ENCODE measurements at regions of chr20 and their contacts with region 1.

Region 1: GRCh38 chr20:58907399-58908137 is 55.1 kb downstream of the GNAS start:
- DNase-seq: peak; percentile 92 to 98
- H3K4me3 ChIP-seq: peak overlapping the region; percentile 1 to 32 (median 21)
- H3K27ac ChIP-seq: peak overlapping the region; percentile 73 to 89 (median 86)
- H3K4me1 ChIP-seq: peaks cover 32 to 63% (median 47%) of the 10 kb centered on the region in 4 donors
- H3K27me3 ChIP-seq: no peaks in the 10 kb centered on the region
- CTCF ChIP-seq: no peak
- EP300 ChIP-seq: no peak
- POLR2A ChIP-seq: no peak

Region 2: GRCh38 chr20:58980700-58981627 is 73.4 kb after region 1 on chr20 and contains the start of gene NELFCD:
- intact Hi-C with region 1: loop called (anchors 10 kb)
- DNase-seq: peak; percentile 92 to 96
- H3K4me3 ChIP-seq: peak within 1 kb of the TSS; percentile 74 to 97 (median 82)
- H3K27ac ChIP-seq: peak within 1 kb of the TSS; percentile 84 to 95 (median 88)
- H3K4me1 ChIP-seq: peaks cover 14 to 43% (median 36%) of the 10 kb centered on the region in 4 donors
- H3K27me3 ChIP-seq: no peaks in the 10 kb centered on the region
- CTCF ChIP-seq: no peak
- EP300 ChIP-seq: no peak
- POLR2A ChIP-seq: no peak
- total RNA-seq, gene NELFCD: 20.9 to 59.5 (median 41.1) TPM

Measured in stomach (tissue), 19 donors.